CD4-positive, alpha-beta T cell (primary cell): ENCODE measurements at regions of chr14 and their contacts with region 1.

Region 1: GRCh38 chr14:61503167-61503801 is 181.9 kb downstream of the PRKCH start:
- DNase-seq: peak; percentile 37 to 82 (median 58)
- ATAC-seq: peak; percentile 86
- H3K4me3 ChIP-seq: no peak overlapping the region
- H3K4me3 Mint-ChIP-seq: peak overlapping the region; percentile 77
- H3K27ac ChIP-seq: peak overlapping the region; percentile 64 to 69
- H3K27ac Mint-ChIP-seq: no peak overlapping the region
- H3K4me1 ChIP-seq: peaks cover 73% of the 10 kb centered on the region
- H3K4me1 Mint-ChIP-seq: peaks cover 96% of the 10 kb centered on the region
- H3K27me3 ChIP-seq: no peaks in the 10 kb centered on the region
- H3K27me3 Mint-ChIP-seq: no peaks in the 10 kb centered on the region
- CTCF ChIP-seq: no peak

Region 2: DNA sequence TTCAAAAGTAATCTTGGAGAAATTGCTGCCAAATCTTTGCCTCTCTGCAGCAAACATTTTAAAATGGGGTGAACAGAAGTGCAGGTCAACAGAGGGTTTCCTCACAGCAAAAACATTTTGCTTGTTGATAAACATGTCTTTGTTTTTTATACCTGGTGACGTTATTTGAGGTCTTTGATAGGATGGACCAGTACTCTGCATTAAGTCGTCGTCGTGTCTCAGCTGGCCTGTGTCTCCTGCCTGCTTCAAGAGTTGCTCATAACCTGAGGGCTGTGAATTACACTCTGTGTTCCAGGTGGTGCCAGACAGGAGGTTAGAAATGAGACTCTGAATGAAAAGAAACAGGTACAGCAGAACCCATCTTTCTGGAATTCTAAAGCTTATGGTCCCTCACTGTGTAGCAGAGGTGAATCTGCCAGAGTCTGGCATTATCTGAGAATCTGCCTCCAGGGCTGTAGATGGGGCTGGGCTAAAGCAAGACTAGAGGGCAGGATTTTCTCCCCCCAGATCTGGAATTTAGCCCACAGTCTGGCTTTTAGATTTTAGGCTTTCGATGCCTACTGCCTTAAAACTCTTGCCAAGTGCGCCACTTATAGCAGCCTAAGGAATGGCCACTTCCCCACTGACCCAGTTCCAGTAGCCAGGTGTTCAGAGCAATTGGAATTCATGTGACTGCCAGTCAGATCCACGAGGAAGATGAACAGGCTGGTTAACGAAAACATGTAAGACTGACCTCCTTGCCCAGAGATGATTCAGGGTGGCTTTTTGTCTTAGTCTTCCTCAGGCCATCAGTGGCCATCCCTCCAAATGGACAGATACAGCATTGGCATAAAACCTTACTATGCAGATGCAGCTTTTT is 20.7 kb before region 1 on chr14:
- CTCF ChIA-PET with region 1: interaction called, 4 read pairs
- POLR2A ChIA-PET with region 1: interaction called, 124 read pairs
- intact Hi-C with region 1: loop called in 1 of 2 experiments (anchors 2 kb)
- DNase-seq: no peak
- ATAC-seq: no peak
- H3K4me3 ChIP-seq: no peak overlapping the region
- H3K4me3 Mint-ChIP-seq: no peak overlapping the region
- H3K27ac ChIP-seq: no peak overlapping the region
- H3K27ac Mint-ChIP-seq: peak overlapping the region; percentile 84
- H3K4me1 ChIP-seq: peaks cover 52% of the 10 kb centered on the region
- H3K4me1 Mint-ChIP-seq: peaks cover 92% of the 10 kb centered on the region
- H3K27me3 ChIP-seq: no peaks in the 10 kb centered on the region
- H3K27me3 Mint-ChIP-seq: no peaks in the 10 kb centered on the region
- CTCF ChIP-seq: no peak

Region 3: GRCh38 chr14:61568572-61569131 is 65.4 kb after region 1 on chr14:
- CTCF ChIA-PET with region 1: no interaction called
- POLR2A ChIA-PET with region 1: interaction called, 4 read pairs
- intact Hi-C with region 1: loop called in 1 of 2 experiments (anchors 2 kb)
- DNase-seq: peak; percentile 24 to 79 (median 54)
- ATAC-seq: peak; percentile 83
- H3K4me3 ChIP-seq: peak overlapping the region; percentile 45
- H3K4me3 Mint-ChIP-seq: peak overlapping the region; percentile 76
- H3K27ac ChIP-seq: no peak overlapping the region
- H3K27ac Mint-ChIP-seq: peak overlapping the region; percentile 83
- H3K4me1 ChIP-seq: peaks cover 39% of the 10 kb centered on the region
- H3K4me1 Mint-ChIP-seq: peaks cover 59% of the 10 kb centered on the region
- H3K27me3 ChIP-seq: no peaks in the 10 kb centered on the region
- H3K27me3 Mint-ChIP-seq: no peaks in the 10 kb centered on the region
- CTCF ChIP-seq: no peak